Activated T-helper 1 cell treated with anti-CD3 and anti-CD28 coated beads, Interleukin-12 subunit alpha, Interleukin-12 subunit beta, Interleukin-2, Interleukin-4 antibody, amounts not matched to agents 30 ng/mL and 10 ng/mL and 1 ng/mL, durations not matched to agents 14 hours and 24 hours and 36 hours (primary cell): ENCODE measurements at regions of chr22 and their contacts with region 1.

Region 1: DNA sequence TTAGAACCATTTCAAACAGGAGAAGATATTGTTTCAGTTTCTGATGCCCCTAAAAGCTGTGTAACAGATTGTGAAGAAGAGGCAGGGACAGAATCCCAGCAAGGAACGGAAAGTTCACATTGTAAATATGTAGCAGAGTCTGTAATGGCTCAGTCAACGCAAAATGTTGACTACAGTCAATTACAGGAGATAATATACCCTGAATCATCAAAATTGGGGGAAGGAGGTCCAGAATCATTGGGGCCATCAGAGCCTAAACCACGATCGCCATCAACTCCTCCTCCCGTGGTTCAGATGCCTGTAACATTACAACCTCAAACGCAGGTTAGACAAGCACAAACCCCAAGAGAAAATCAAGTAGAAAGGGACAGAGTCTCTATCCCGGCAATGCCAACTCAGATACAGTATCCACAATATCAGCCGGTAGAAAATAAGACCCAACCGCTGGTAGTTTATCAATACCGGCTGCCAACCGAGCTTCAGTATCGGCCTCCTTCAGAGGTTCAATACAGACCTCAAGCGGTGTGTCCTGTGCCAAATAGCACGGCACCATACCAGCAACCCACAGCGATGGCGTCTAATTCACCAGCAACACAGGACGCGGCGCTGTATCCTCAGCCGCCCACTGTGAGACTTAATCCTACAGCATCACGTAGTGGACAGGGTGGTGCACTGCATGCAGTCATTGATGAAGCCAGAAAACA is 40.8 kb downstream of the IGLL1 start:
- DNase-seq: peak; percentile 60
- H3K4me3 Mint-ChIP-seq: peak overlapping the region; percentile 40
- H3K27ac Mint-ChIP-seq: no peak overlapping the region
- H3K4me1 Mint-ChIP-seq: peaks cover 11% of the 10 kb centered on the region
- H3K27me3 Mint-ChIP-seq: peaks cover 23% of the 10 kb centered on the region

Region 2: GRCh38 chr22:23402275-23403151 is 136.8 kb before region 1 on chr22:
- intact Hi-C with region 1: loop called (anchors 1 kb)
- DNase-seq: peak; percentile 9
- H3K4me3 Mint-ChIP-seq: no peak overlapping the region
- H3K27ac Mint-ChIP-seq: no peak overlapping the region
- H3K4me1 Mint-ChIP-seq: no peaks in the 10 kb centered on the region
- H3K27me3 Mint-ChIP-seq: peaks cover 12% of the 10 kb centered on the region

Region 3: GRCh38 chr22:23591201-23591791 is 52.0 kb after region 1 on chr22:
- intact Hi-C with region 1: loop called (anchors 1 kb)
- DNase-seq: peak; percentile 18
- H3K4me3 Mint-ChIP-seq: no peak overlapping the region
- H3K27ac Mint-ChIP-seq: no peak overlapping the region
- H3K4me1 Mint-ChIP-seq: no peaks in the 10 kb centered on the region
- H3K27me3 Mint-ChIP-seq: peaks cover 9% of the 10 kb centered on the region

Region 4: GRCh38 chr22:23767673-23768548 is 228.6 kb after region 1 on chr22 and contains the start of gene CHCHD10:
- intact Hi-C with region 1: loop called (anchors 5 kb)
- DNase-seq: peak; percentile 77
- H3K4me3 Mint-ChIP-seq: peak within 1 kb of the TSS; percentile 86
- H3K27ac Mint-ChIP-seq: peak within 1 kb of the TSS; percentile 67
- H3K4me1 Mint-ChIP-seq: peaks cover 24% of the 10 kb centered on the region
- H3K27me3 Mint-ChIP-seq: peaks cover 6% of the 10 kb centered on the region
- total RNA-seq, gene CHCHD10: 89.1 and 96.4 TPM in 2 replicates

Region 5: GRCh38 chr22:23849009-23850006 is 310.0 kb after region 1 on chr22:
- intact Hi-C with region 1: loop called (anchors 1 kb)
- DNase-seq: peak; percentile 82
- H3K4me3 Mint-ChIP-seq: no peak overlapping the region
- H3K27ac Mint-ChIP-seq: no peak overlapping the region
- H3K4me1 Mint-ChIP-seq: no peaks in the 10 kb centered on the region
- H3K27me3 Mint-ChIP-seq: peaks cover 8% of the 10 kb centered on the region